ENCODE measurements at regions of chr15 and their contacts with region 1.

Region 1: DNA sequence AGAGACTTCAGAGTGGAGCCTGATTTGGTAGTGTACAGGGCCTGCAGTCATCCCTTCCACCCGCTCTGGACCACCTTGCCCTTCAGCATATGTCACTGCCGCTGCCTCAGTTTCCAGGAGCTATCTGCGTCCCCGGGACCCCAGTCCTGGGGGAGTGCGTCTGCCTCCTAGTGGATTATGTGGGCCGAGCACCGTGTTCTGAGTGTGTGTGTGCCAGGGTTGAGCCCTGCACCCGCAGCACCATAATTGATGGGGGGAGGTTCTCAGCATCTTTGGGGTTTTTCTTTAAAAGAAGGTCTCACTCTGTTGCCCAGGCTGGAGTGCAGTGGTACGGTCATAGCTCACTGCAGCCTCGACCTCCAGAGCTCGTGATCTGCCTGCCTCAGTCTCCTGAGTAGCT is 33.6 kb downstream of the CD276 start:
- DNase-seq: no peak
- ATAC-seq: no peak
- H3K4me3 ChIP-seq: no peak overlapping the region
- H3K27ac ChIP-seq: no peak overlapping the region
- H3K4me1 ChIP-seq: peaks cover 0 to 22% (median 0%) of the 10 kb centered on the region in 12 donors
- H3K27me3 ChIP-seq: no peaks in the 10 kb centered on the region
- CTCF ChIP-seq: peak in 2 of 12 donors; percentile 10 to 22
- POLR2A ChIP-seq: no peak

Region 2: DNA sequence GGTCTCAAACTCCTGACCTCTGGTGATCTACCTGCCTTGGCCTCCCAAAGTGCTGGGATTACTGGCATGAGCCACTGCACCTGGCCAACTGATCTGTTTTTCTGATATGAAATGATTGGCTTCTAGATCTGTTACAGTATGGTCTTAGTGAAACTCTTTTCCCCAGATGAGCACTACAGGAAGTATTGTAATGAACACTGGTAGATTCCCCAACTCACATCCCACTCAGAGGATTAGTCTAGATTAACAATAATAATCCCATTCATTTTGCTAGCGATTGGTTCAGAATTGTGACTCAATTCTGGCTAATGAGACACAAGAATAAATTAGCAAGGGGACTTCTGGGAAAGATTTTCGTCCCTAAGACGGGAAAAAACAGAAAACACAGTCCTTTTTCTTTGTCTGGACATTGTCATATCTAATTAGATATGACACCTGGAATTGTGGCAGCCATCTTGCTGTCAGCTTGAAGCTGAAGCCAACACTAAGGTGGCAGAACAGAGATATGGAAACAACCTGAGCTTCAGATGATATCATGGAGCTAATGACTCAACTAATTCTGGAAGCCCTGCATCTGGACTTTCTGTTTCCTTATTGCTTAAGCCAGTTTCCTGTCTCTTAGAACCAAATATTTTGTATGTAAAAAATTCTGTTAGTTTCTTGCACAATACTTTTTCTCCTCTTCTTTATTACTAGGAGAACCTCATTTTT is 67.2 kb before region 1 on chr15:
- intact Hi-C with region 1: no loop called
- DNase-seq: no peak
- ATAC-seq: peak in 1 of 4 donors; percentile 65
- H3K4me3 ChIP-seq: no peak overlapping the region
- H3K27ac ChIP-seq: peak overlapping the region in 1 of 12 donors; percentile 40
- H3K4me1 ChIP-seq: peaks cover 0 to 15% (median 0%) of the 10 kb centered on the region in 12 donors
- H3K27me3 ChIP-seq: peaks cover 0 to 6% (median 0%) of the 10 kb centered on the region in 9 donors
- CTCF ChIP-seq: no peak
- POLR2A ChIP-seq: no peak

Region 3: GRCh38 chr15:73794443-73795133 is 76.8 kb after region 1 on chr15:
- intact Hi-C with region 1: loop called in 3 of 10 experiments (anchors 5 to 10 kb)
- DNase-seq: no peak
- ATAC-seq: no peak
- H3K4me3 ChIP-seq: no peak overlapping the region
- H3K27ac ChIP-seq: no peak overlapping the region
- H3K4me1 ChIP-seq: peaks cover 0 to 23% (median 2%) of the 10 kb centered on the region in 12 donors
- H3K27me3 ChIP-seq: no peaks in the 10 kb centered on the region
- CTCF ChIP-seq: no peak
- POLR2A ChIP-seq: no peak

Region 4: GRCh38 chr15:73908030-73908821 is 190.4 kb after region 1 on chr15:
- intact Hi-C with region 1: loop called in 5 of 10 experiments (anchors 5 to 10 kb)
- DNase-seq: peak; percentile 76 to 89 (median 87)
- ATAC-seq: peak; percentile 91 to 97 (median 96)
- H3K4me3 ChIP-seq: no peak overlapping the region
- H3K27ac ChIP-seq: no peak overlapping the region
- H3K4me1 ChIP-seq: peaks cover 0 to 17% (median 5%) of the 10 kb centered on the region in 12 donors
- H3K27me3 ChIP-seq: no peaks in the 10 kb centered on the region
- CTCF ChIP-seq: peak; percentile 82 to 95 (median 91)
- POLR2A ChIP-seq: no peak